Caco-2 (cell line): ENCODE measurements at regions of chr15 and their contacts with region 1.

Region 1: DNA sequence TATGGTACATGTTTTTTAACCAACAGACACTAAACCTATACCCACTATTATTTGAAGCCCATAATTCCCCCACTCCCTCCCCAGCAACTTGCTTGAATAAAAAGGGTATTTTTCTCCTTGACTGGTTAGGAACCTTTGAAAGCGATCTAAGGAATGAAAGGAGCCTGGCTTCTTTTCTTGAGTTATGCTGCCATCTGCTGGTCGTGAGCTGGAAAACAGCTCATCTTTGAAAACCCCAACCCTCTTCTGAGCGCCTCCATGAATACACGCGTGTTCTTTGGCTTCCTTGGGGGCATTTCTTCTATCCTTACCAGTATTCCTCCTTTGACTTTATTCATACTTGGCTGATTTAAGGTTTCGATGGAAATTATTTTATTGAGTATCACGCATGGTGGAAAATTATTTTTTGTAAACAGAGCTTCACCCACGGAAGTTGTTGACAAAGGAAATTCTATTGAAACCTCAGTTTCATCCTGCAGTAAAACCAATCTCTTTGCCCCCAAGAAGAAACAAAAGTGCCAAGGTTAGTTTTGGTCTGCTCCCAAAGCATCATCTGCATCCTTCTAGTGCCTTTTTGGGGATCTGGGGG is 171.6 kb downstream of the SV2B start:
- DNase-seq: peak in 1 of 2 experiments; percentile 59
- H3K4me3 ChIP-seq: no peak overlapping the region
- H3K4me3 Mint-ChIP-seq: no peak overlapping the region
- H3K27ac Mint-ChIP-seq: no peak overlapping the region
- H3K4me1 ChIP-seq: no peaks in the 10 kb centered on the region
- H3K4me1 Mint-ChIP-seq: no peaks in the 10 kb centered on the region
- H3K27me3 ChIP-seq: no peaks in the 10 kb centered on the region
- H3K27me3 Mint-ChIP-seq: peaks cover 10% of the 10 kb centered on the region
- CTCF ChIP-seq: peak; percentile 67 to 79

Region 2: GRCh38 chr15:90648137-90649070 is 623.3 kb before region 1 on chr15:
- CTCF ChIA-PET with region 1: interaction called, 4 read pairs
- POLR2A ChIA-PET with region 1: no interaction called
- intact Hi-C with region 1: loop called (anchors 5 kb)
- DNase-seq: peak; percentile 63 to 64
- H3K4me3 ChIP-seq: no peak overlapping the region
- H3K4me3 Mint-ChIP-seq: peak overlapping the region; percentile 52
- H3K27ac Mint-ChIP-seq: peak overlapping the region; percentile 86
- H3K4me1 ChIP-seq: peaks cover 13% of the 10 kb centered on the region
- H3K4me1 Mint-ChIP-seq: peaks cover 10% of the 10 kb centered on the region
- H3K27me3 ChIP-seq: no peaks in the 10 kb centered on the region
- H3K27me3 Mint-ChIP-seq: no peaks in the 10 kb centered on the region
- CTCF ChIP-seq: peak; percentile 86 to 90

Region 3: DNA sequence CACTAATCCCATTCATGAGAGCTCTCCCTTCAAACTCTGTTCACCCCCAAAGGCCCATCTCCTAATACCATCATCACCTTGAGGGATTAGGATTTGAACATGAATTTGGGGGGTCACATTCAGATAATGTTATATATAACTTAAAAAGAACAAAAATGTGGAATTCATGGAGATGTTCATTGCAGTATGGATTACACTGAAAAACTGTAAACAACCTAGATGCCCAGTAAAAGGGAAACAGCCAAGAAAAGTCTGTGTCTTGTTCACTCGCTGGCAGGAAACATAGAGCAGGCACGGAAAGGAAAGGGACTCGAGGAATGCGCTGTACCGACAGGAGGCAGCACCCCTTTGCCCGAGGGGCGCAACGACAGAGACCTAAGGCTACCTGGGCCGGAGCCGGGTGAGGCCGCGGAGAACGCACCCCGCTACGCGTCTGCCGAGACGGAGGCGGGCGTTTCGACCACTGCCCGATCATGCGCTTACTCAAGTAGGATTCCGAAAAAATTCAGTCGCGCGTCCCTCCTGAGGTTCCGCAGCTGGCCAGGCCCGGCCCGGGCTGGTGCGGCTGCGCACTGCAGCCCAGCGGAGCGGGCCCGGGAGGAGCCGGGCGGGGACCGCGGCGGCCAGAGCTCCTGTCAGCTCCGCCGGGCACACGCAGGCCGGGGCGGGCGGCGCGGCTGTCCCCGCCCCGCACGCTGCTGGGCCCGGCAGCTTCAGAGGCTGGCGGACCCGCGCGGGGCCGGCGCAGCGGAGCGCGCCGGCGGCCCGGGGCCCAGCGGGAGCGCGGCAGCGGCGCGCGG is 369.4 kb before region 1 on chr15:
- CTCF ChIA-PET with region 1: no interaction called
- POLR2A ChIA-PET with region 1: no interaction called
- intact Hi-C with region 1: loop called (anchors 5 kb)
- DNase-seq: peak; percentile 74 to 83
- H3K4me3 ChIP-seq: peak overlapping the region; percentile 51
- H3K4me3 Mint-ChIP-seq: peak overlapping the region; percentile 89
- H3K27ac Mint-ChIP-seq: peak overlapping the region; percentile 67
- H3K4me1 ChIP-seq: 0 out of 2 replicates have a peak, but pooled peaks cover 7% of the 10 kb centered on the region
- H3K4me1 Mint-ChIP-seq: no peaks in the 10 kb centered on the region
- H3K27me3 ChIP-seq: no peaks in the 10 kb centered on the region
- H3K27me3 Mint-ChIP-seq: peaks cover 2% of the 10 kb centered on the region
- CTCF ChIP-seq: peak; percentile 67 to 89

Region 4: DNA sequence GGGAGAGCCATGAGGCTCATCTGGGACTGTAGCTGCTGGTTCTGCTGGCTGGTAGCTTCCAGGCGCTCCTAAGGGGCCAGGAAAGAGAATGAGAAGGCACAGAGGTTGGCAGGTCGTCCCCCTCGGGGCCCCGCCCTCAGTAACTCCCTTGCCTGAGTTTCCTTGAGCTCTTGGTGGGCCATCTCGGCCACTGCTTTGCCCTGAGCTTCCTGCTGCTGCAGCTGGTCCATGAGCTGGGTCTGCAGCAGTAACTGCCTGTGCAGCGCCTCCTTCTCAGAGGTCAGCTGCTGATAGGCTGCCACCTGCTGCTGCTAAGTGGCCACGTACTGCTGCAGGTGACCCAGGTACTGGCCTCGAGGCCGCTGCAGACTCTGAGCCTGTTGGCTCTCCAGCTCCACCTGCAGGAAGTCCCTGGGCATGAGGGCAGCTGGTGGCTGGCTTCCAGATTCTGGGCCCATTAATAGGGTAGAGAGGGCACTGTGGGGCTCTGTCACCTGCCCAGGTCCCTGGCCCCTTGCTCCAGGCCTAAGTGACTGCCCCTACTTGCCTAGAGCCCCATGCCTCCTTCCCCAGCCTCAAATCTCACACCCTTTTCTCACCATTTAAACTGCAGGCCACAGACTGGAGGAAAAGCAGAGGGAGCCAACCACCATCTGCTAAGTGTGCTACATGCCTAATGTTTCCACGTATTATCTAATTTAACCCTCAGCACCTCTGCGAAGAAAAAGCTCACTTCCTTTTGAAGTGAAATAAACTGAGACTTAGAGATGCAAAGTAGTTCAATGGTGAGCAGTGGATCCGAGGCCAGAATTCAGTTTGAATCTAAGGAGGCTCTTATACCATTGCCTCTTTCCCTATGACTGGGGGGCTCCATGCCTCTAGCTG is 238.5 kb before region 1 on chr15:
- CTCF ChIA-PET with region 1: interaction called, 10 read pairs
- POLR2A ChIA-PET with region 1: no interaction called
- intact Hi-C with region 1: no loop called
- DNase-seq: peak; percentile 91 to 92
- H3K4me3 ChIP-seq: no peak overlapping the region
- H3K4me3 Mint-ChIP-seq: no peak overlapping the region
- H3K27ac Mint-ChIP-seq: no peak overlapping the region
- H3K4me1 ChIP-seq: no peaks in the 10 kb centered on the region
- H3K4me1 Mint-ChIP-seq: peaks cover 7% of the 10 kb centered on the region
- H3K27me3 ChIP-seq: no peaks in the 10 kb centered on the region
- H3K27me3 Mint-ChIP-seq: peaks cover 17% of the 10 kb centered on the region
- CTCF ChIP-seq: peak; percentile 83 to 84

Region 5: DNA sequence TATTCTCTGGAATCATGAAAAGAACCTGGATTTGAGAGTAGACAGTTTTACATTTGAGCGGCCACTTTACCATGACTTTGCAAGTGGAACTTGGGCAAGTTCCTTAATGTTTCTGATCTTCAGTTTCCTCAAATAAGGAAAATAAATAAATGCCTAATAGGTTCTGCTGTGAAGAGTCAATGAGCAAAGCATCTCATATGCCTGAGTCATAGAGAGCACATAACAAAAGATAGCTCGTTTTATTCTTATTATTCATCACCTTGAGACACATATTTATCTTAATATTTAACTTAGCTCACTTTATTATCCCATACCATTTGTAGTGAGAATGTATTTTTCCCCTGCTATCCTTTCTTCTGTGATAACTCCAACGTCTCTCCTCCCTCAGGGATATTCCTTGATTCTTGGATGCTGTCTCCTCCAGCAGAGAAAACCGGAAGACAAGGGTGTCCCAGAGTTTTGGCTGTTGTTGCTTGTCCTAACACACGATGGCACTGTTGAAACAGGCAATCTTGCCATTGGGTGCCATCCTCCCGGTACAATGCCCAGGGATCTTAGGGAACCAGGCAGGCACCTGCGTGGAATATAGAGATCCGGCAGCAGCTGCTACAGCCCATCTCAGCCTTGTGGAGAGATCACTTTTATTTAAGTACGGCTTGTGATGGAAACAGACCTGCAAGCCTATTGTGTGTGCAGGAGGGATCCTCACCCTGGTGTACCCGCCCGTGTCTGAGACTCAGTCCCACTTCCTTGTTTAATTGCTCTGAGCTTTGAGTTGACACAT is 215.9 kb before region 1 on chr15:
- CTCF ChIA-PET with region 1: interaction called, 31 read pairs
- POLR2A ChIA-PET with region 1: no interaction called
- intact Hi-C with region 1: loop called (anchors 1 kb)
- DNase-seq: peak; percentile 62 to 63
- H3K4me3 ChIP-seq: no peak overlapping the region
- H3K4me3 Mint-ChIP-seq: no peak overlapping the region
- H3K27ac Mint-ChIP-seq: no peak overlapping the region
- H3K4me1 ChIP-seq: no peaks in the 10 kb centered on the region
- H3K4me1 Mint-ChIP-seq: no peaks in the 10 kb centered on the region
- H3K27me3 ChIP-seq: no peaks in the 10 kb centered on the region
- H3K27me3 Mint-ChIP-seq: peaks cover 36% of the 10 kb centered on the region
- CTCF ChIP-seq: peak; percentile 63 to 66

Region 6: GRCh38 chr15:91208371-91208770 is 63.3 kb before region 1 on chr15:
- CTCF ChIA-PET with region 1: no interaction called
- POLR2A ChIA-PET with region 1: no interaction called
- intact Hi-C with region 1: no loop called
- DNase-seq: no peak
- H3K4me3 ChIP-seq: no peak overlapping the region
- H3K4me3 Mint-ChIP-seq: no peak overlapping the region
- H3K27ac Mint-ChIP-seq: no peak overlapping the region
- H3K4me1 ChIP-seq: no peaks in the 10 kb centered on the region
- H3K4me1 Mint-ChIP-seq: no peaks in the 10 kb centered on the region
- H3K27me3 ChIP-seq: no peaks in the 10 kb centered on the region
- H3K27me3 Mint-ChIP-seq: peaks cover 29% of the 10 kb centered on the region
- CTCF ChIP-seq: no peak

Region 7: DNA sequence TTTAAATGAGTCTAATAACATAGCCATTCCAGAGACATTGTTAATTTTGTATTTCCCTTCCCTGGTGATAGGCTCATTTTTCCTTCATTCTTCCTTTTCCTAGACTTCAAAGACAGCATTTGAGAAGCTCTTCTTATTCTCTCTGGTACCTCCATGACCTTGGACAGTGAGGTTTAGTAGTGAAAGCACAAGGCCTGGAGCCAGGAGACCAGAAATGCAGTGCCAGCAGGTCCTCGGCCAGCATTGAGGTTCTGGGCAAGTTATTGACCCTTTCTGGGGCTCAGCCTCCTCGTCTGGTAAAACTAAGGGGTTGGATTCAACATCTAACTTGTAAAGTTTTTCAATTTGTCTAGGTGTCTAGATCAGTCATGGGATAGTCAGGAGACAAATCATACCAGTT is 24.7 kb before region 1 on chr15:
- CTCF ChIA-PET with region 1: no interaction called
- POLR2A ChIA-PET with region 1: no interaction called
- intact Hi-C with region 1: loop called (anchors 2 kb)
- DNase-seq: no peak
- H3K4me3 ChIP-seq: no peak overlapping the region
- H3K4me3 Mint-ChIP-seq: no peak overlapping the region
- H3K27ac Mint-ChIP-seq: no peak overlapping the region
- H3K4me1 ChIP-seq: no peaks in the 10 kb centered on the region
- H3K4me1 Mint-ChIP-seq: no peaks in the 10 kb centered on the region
- H3K27me3 ChIP-seq: no peaks in the 10 kb centered on the region
- H3K27me3 Mint-ChIP-seq: peaks cover 10% of the 10 kb centered on the region
- CTCF ChIP-seq: no peak